Ovary (tissue), 10 donors: ENCODE measurements at regions of chr5 and their contacts with region 1.

Region 1: GRCh38 chr5:154179846-154180710 is 10.5 kb upstream of the GALNT10 start:
- DNase-seq: no peak
- H3K4me3 ChIP-seq: no peak overlapping the region
- H3K27ac ChIP-seq: no peak overlapping the region
- H3K4me1 ChIP-seq: no peaks in the 10 kb centered on the region
- H3K27me3 ChIP-seq: no peaks in the 10 kb centered on the region
- CTCF ChIP-seq: peak; percentile 26 to 50 (median 38)
- EP300 ChIP-seq: no peak
- POLR2A ChIP-seq: no peak

Region 2: DNA sequence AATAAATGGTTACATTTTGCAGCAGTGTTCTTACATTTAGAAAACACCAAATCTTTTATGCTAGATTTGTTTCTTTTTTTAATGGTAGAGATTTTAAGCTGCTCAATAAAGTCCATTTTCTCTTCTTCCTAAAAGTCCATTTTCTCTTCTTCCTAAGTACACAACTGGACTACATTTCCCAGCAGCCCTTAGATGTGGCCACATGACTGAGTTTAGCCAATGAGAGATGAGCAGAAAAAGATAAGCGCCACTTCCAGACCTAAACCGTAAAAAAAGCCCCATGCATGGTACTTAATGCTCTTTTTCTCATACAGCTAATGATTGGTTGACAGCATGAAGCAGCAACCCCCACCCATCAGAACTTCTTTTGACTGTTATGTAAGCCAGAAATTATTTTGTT is 348.1 kb before region 1 on chr5:
- intact Hi-C with region 1: no loop called
- DNase-seq: no peak
- H3K4me3 ChIP-seq: no peak overlapping the region
- H3K27ac ChIP-seq: no peak overlapping the region
- H3K4me1 ChIP-seq: no peaks in the 10 kb centered on the region
- H3K27me3 ChIP-seq: no peaks in the 10 kb centered on the region
- CTCF ChIP-seq: no peak
- EP300 ChIP-seq: no peak
- POLR2A ChIP-seq: no peak

Region 3: GRCh38 chr5:154072414-154073171 is 107.5 kb before region 1 on chr5:
- intact Hi-C with region 1: loop called in 1 of 4 experiments (anchors 10 kb)
- DNase-seq: peak; percentile 73 to 89 (median 88)
- H3K4me3 ChIP-seq: no peak overlapping the region
- H3K27ac ChIP-seq: no peak overlapping the region
- H3K4me1 ChIP-seq: no peaks in the 10 kb centered on the region
- H3K27me3 ChIP-seq: no peaks in the 10 kb centered on the region
- CTCF ChIP-seq: peak; percentile 84 to 89 (median 88)
- EP300 ChIP-seq: no peak
- POLR2A ChIP-seq: no peak

Region 4: GRCh38 chr5:154087257-154087656 is 92.8 kb before region 1 on chr5:
- intact Hi-C with region 1: loop called in 1 of 4 experiments (anchors 10 kb)
- DNase-seq: no peak
- H3K4me3 ChIP-seq: no peak overlapping the region
- H3K27ac ChIP-seq: no peak overlapping the region
- H3K4me1 ChIP-seq: no peaks in the 10 kb centered on the region
- H3K27me3 ChIP-seq: no peaks in the 10 kb centered on the region
- CTCF ChIP-seq: no peak
- EP300 ChIP-seq: no peak
- POLR2A ChIP-seq: no peak

Region 5: DNA sequence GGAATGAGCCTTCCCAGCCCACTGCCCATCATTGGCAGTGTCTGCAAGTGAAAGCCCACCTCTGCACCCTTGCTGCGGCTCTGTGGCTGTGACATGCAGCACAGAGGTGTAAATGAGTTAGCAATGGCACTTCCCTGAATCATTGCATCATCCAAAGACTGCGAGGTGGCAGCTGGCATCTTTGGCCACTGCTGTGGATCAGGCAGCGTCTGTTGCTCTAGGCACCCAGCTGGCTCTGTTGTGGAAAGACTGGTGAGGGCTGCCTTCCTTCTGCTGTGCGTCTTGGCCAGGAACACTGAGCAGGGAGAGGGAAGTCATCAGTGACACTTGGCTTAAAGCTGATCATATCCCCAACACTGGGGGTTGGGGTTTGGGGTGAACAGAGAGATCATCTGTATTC is 76.8 kb before region 1 on chr5:
- intact Hi-C with region 1: no loop called
- DNase-seq: no peak
- H3K4me3 ChIP-seq: no peak overlapping the region
- H3K27ac ChIP-seq: no peak overlapping the region
- H3K4me1 ChIP-seq: no peaks in the 10 kb centered on the region
- H3K27me3 ChIP-seq: no peaks in the 10 kb centered on the region
- CTCF ChIP-seq: no peak
- EP300 ChIP-seq: no peak
- POLR2A ChIP-seq: no peak

Region 6: DNA sequence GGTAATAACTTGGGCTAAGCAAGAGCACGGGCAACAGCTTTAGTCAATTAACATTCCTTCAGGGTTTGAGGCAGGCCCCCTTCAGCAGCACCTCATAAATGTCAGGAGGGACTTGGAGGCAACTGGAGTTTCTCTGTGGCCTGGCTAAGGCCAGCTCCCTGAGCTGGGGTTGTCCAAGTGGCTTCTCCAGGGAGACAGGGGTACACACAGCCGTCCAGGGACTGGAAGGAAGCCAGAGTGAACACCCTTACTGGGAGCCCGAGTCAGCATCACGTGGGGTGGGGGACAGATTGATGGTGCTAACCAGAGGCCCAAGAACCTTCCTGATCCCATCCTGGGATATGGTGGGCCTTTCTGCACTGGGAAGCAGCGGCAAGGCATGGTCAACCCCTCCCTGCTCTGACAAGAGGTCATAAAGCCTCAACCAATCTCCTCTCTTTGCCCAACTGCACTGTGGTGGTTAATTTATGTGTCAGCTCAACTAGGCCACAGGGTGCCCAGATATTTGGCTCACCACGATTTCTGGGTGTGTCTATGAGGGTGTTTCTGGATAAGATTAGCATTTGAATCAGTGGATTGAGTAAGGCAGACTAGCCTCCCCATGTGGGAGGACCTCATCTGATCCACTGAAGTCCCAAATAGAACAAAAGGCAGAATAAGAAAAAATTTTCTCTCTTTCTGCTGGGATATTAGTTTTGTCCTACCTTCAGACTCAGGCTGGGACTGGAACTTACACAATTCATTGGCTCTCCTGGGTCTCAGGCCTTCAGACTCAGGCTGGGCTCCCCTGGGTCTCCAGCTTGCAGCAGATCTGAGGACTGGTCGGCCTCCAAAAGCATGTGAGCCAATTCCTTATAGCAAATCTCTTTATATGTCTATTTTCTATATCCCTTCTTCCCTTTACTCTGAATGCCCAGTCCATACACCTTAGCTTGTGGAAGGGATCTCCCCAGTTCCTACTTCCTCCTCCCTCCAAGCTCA is 447.9 kb after region 1 on chr5:
- intact Hi-C with region 1: no loop called
- DNase-seq: no peak
- H3K4me3 ChIP-seq: no peak overlapping the region
- H3K27ac ChIP-seq: no peak overlapping the region
- H3K4me1 ChIP-seq: no peaks in the 10 kb centered on the region
- H3K27me3 ChIP-seq: no peaks in the 10 kb centered on the region
- CTCF ChIP-seq: no peak
- EP300 ChIP-seq: no peak
- POLR2A ChIP-seq: no peak

Region 7: GRCh38 chr5:155471027-155471426 is 1290.9 kb after region 1 on chr5:
- intact Hi-C with region 1: no loop called
- DNase-seq: no peak
- H3K4me3 ChIP-seq: no peak overlapping the region
- H3K27ac ChIP-seq: no peak overlapping the region
- H3K4me1 ChIP-seq: no peaks in the 10 kb centered on the region
- H3K27me3 ChIP-seq: no peaks in the 10 kb centered on the region
- CTCF ChIP-seq: no peak
- EP300 ChIP-seq: no peak
- POLR2A ChIP-seq: no peak